Activated CD4-positive, alpha-beta memory T cell treated with anti-CD3 and anti-CD28 coated beads, Interleukin-2, amount 10 ng/mL, durations not matched to agents 7 days and 5 days (primary cell): ENCODE measurements at regions of chr19 and their contacts with region 1.

Region 1: DNA sequence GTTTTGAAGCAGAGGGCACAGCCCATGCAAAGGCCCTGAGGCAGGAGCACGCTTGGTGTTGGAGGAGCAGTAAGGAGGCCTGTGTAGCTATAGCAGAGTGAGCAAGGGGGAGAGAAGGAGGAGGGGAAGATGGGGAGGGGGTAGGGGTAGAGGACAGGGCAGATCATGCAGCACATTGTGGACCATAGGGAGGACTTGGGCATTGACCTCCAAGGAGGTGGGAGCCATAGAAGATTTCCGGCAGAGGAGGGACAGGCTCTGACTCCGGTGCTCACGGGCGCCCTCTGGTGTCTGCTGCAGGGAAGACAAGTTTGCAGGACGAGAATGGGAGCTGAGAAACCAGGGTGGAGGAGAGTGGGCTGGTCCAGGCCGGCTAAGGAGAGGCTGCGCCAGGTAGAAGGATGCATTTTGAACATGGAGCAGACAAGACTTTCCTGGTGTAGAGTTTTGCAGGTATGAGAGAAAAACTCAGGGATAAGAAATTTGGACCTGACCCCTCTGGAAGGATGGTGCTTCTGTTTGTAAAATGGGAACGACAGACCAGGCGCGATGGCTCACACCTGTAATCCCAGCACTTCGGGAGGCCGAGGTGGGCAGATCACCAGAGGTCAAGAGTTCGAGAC is 13.7 kb upstream of the CREB3L3 start:
- DNase-seq: peak; percentile 89
- H3K4me3 Mint-ChIP-seq: peak overlapping the region; percentile 48
- H3K27ac Mint-ChIP-seq: peak overlapping the region; percentile 17
- H3K4me1 Mint-ChIP-seq: peaks cover 13% of the 10 kb centered on the region
- H3K27me3 Mint-ChIP-seq: peaks cover 2% of the 10 kb centered on the region

Region 2: DNA sequence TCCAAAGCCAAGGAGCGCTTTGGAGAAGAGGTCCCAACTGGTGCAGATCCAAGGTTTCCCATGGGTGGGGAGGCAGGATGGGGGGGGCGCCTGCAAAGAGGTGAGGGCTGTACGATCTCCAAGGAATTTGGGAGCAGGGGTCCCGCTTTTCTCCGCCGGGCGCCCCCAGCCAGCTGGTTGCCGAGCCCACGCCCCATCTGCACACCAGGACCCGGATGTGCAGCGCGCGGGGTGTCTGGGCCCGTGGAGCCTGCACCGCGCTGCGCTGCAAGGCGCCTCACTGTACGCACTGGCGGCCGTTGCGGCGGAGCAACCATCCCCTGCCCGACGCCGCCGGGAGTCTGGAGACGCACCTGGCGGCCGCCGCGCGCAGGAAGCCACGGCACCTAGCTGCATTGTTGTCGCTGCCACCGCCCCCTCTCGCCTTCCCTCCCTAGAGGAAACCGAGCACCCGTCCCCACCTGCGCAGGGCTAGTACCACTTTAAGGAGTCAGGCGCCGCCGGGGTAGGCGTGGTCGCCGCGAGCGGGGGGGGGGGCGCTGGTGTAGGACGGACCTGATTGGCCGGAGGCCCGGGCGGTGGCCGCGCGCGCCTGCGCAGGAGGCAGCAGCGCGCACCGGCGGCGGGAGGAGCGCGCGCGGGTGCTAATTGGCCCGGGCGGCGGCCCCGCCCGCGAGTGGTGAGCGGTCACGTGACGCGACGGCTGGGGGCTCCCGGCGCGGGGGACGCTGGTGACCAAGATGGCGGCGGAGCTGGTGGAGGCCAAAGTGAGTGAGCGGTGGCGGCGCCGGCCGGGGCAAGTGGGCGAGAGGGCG is 132.5 kb before region 1 on chr19 and contains the start of gene PIAS4:
- CTCF ChIA-PET with region 1: interaction called, 10 read pairs
- POLR2A ChIA-PET with region 1: no interaction called
- DNase-seq: peak; percentile 96
- H3K4me3 Mint-ChIP-seq: peak within 1 kb of the TSS; percentile 85
- H3K27ac Mint-ChIP-seq: peak within 1 kb of the TSS; percentile 71
- H3K4me1 Mint-ChIP-seq: peaks cover 29% of the 10 kb centered on the region
- H3K27me3 Mint-ChIP-seq: no peaks in the 10 kb centered on the region
- total RNA-seq, gene PIAS4: 28.6 to 33.2 TPM

Region 3: DNA sequence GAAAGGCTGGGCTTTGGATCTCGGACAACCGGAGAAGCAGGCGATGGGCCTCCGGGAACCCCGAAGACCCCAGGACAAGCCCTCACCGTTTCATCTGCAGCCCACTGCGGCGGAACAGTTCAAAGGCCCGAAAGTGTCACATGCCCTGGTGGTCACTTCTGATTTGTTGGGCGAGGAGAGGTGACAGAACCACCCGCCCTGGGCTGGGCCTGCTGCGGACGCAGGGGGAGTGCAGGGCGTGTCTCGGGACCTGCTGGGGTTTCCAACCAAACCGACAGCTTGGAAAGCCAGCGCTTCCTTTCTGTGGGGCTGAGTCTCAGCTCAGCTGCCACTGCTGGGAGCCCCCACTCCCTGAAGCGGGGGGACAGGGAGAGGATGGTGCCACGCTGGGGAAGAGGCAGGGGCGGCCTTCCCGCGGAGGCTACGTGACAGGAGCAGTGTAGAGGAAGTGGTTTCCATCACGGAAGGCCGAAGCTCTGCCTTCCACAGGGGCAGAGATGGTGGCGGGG is 50.3 kb before region 1 on chr19:
- CTCF ChIA-PET with region 1: interaction called, 24 read pairs
- POLR2A ChIA-PET with region 1: no interaction called
- DNase-seq: peak; percentile 81
- H3K4me3 Mint-ChIP-seq: peak overlapping the region; percentile 68
- H3K27ac Mint-ChIP-seq: peak overlapping the region; percentile 98
- H3K4me1 Mint-ChIP-seq: peaks cover 59% of the 10 kb centered on the region
- H3K27me3 Mint-ChIP-seq: no peaks in the 10 kb centered on the region

Region 4: DNA sequence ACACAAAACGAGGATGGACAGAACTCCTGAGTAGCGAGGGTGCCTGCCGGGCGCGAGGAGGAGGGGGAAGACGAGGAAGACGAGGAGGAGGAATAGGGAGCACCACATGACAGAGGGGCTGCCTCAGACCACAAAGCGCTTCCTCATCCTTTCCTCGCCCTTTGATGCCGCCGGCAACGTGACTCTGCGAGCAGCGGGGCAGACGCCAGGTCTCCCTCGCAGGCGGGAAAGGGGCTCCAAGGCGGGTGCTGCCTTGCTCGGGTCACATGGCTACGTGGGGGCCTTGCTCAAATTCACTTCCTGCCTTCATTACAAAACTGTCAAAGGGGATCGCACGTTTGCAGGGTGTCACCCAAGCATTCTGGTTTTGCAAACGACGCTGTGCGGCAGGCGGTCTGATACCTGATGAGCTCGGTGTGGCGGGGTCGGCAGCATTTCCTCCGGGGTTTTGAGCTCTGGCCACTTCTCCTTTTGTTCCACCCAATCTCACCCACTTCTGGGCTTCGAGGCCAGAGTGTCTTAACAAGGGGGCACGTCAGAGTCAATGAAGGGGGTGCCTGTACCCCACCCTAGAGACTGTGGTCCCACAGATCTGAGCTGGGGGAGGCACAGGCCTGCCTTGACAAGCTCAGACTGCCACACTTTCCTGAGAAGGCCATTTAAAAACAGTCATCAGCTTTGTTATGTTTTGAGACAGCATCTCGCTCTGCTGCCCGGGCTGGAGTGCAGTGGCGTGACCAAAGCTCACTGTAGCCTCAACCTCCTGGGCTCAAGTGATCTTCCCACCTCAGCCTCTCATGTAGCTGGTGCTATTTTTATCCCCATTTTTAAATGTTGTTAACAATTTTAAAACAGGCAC is 30.7 kb before region 1 on chr19:
- CTCF ChIA-PET with region 1: interaction called, 13 read pairs
- POLR2A ChIA-PET with region 1: interaction called, 4 read pairs
- DNase-seq: peak; percentile 74
- H3K4me3 Mint-ChIP-seq: peak overlapping the region; percentile 32
- H3K27ac Mint-ChIP-seq: peak overlapping the region; percentile 95
- H3K4me1 Mint-ChIP-seq: peaks cover 65% of the 10 kb centered on the region
- H3K27me3 Mint-ChIP-seq: no peaks in the 10 kb centered on the region

Region 5: GRCh38 chr19:4152241-4152998 is 12.7 kb after region 1 on chr19:
- CTCF ChIA-PET with region 1: interaction called, 25 read pairs
- POLR2A ChIA-PET with region 1: no interaction called
- DNase-seq: no peak
- H3K4me3 Mint-ChIP-seq: no peak overlapping the region
- H3K27ac Mint-ChIP-seq: no peak overlapping the region
- H3K4me1 Mint-ChIP-seq: peaks cover 13% of the 10 kb centered on the region
- H3K27me3 Mint-ChIP-seq: peaks cover 1% of the 10 kb centered on the region

Region 6: DNA sequence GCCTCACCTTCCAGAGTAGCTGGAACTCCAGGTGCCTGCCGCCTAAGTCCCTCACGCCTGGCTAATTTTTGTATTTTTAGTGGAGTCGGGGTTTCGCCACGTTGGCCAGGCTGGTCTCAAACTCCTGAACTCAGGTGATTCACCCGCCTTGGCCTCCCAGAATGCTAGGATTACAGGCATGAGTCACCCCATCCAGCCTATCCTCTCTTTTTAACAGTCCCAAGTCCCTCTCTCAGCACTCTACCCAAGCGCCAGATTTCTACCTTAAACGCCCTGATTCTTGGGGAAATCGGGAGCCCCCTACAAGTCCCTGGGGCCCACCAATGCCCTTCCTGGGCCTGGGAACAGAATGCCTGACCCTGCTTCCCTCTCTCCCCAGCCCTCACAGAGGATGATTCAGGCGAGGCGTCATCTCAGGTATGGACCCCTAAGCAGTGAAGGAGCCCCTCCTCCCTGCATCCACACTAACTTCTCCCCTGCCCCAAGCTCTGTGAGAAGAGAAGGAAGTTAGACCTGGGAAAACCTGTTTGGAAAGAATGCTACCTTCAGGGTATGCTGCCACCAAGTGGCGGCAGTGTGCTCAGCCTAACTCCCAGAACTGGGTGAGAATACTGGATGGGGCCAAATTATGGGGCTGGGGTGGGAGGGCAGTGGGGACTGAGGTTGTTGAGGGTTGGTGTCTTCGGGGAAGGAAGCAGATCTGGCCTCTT is 68.8 kb after region 1 on chr19:
- CTCF ChIA-PET with region 1: interaction called, 17 read pairs
- POLR2A ChIA-PET with region 1: no interaction called
- DNase-seq: no peak
- H3K4me3 Mint-ChIP-seq: no peak overlapping the region
- H3K27ac Mint-ChIP-seq: no peak overlapping the region
- H3K4me1 Mint-ChIP-seq: no peaks in the 10 kb centered on the region
- H3K27me3 Mint-ChIP-seq: peaks cover 2% of the 10 kb centered on the region

Region 7: GRCh38 chr19:4567584-4568071 is 427.9 kb after region 1 on chr19:
- CTCF ChIA-PET with region 1: no interaction called
- POLR2A ChIA-PET with region 1: no interaction called
- DNase-seq: peak; percentile 67
- H3K4me3 Mint-ChIP-seq: no peak overlapping the region
- H3K27ac Mint-ChIP-seq: no peak overlapping the region
- H3K4me1 Mint-ChIP-seq: no peaks in the 10 kb centered on the region
- H3K27me3 Mint-ChIP-seq: no peaks in the 10 kb centered on the region